ENCODE measurements at regions of chr6 and their contacts with region 1.

Region 1: DNA sequence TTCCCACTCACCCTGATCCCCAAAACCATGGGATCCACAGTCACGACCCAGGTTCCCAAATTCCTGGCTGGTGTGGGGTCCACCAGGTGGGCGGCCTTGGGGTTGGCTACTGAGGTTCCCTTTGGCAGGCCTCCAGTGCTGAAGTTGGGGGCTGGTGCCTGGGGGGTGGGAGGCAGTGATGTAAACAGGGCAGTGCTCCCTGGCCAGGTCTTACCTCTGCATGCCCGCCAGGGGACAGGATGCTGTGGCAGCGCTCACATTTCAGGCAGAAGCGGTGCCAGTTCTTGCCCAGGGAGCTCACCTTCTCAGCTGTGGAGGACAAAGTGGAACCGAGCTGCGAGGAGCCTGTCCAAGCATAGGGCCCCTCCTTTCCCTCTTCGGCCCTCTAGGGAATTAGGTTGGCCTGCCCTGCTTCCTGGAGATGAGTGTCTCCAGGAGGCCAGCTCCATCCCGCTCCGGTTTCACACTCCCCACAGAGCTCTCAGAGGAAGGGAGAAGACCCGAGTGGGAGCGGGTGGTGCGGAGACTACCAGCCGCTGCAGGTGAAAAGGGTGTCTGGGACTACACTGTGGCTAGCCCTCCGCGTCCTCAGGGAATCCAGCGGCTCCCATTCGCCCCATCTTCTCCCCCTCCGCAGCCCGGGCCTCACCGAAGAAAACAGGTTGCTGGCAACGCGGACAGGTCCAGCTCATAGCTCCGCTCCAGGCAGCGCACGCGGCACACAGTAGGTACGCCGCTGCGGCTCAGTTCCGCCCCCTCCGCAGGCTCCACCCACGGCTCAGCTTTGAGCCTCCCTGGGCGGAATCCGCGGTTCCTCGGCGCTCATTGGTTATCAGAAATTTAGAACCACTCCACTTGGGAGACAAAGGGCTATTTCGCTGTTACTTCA is at the start of gene CRIP3:
- DNase-seq: peak; percentile 74
- H3K4me3 Mint-ChIP-seq: peak within 1 kb of the TSS; percentile 74
- H3K27ac Mint-ChIP-seq: no peak within 1 kb of the TSS
- H3K4me1 Mint-ChIP-seq: peaks cover 10% of the 10 kb centered on the region
- H3K27me3 Mint-ChIP-seq: no peaks in the 10 kb centered on the region
- CTCF ChIP-seq: peak; percentile 74
- total RNA-seq, gene CRIP3: 2.3 and 5.4 TPM in 2 replicates

Region 2: DNA sequence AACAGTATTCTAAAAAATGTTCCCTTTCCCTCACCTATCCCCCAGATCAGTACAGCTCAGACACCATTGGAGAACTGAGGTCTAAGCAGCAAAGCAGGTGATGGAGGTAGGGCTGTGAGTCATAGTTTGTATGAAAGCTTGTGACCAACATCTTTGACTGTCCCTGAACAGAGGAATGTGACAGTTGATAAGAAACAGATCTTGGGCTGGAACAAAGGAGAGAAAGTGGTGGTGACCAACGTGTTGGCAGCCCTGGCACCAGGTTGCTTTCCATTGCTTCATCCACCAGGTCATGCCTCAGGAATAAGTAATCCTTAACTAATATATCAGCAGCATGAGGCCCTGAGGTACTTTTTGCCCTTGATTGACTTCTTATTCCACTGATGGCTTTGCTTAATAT is 20.2 kb after region 1 on chr6:
- CTCF ChIA-PET with region 1: interaction called, 38 read pairs
- intact Hi-C with region 1: no loop called
- DNase-seq: peak; percentile 71
- H3K4me3 Mint-ChIP-seq: peak overlapping the region; percentile 27
- H3K27ac Mint-ChIP-seq: peak overlapping the region; percentile 94
- H3K4me1 Mint-ChIP-seq: peaks cover 29% of the 10 kb centered on the region
- H3K27me3 Mint-ChIP-seq: no peaks in the 10 kb centered on the region
- CTCF ChIP-seq: no peak